Posterior cingulate gyrus (tissue), 11 donors: ENCODE measurements at regions of chrX and their contacts with region 1.

Region 1: GRCh38 chrX:143664302-143664701 is 28.4 kb upstream of the SLITRK4 start:
- DNase-seq: no peak

Region 2: DNA sequence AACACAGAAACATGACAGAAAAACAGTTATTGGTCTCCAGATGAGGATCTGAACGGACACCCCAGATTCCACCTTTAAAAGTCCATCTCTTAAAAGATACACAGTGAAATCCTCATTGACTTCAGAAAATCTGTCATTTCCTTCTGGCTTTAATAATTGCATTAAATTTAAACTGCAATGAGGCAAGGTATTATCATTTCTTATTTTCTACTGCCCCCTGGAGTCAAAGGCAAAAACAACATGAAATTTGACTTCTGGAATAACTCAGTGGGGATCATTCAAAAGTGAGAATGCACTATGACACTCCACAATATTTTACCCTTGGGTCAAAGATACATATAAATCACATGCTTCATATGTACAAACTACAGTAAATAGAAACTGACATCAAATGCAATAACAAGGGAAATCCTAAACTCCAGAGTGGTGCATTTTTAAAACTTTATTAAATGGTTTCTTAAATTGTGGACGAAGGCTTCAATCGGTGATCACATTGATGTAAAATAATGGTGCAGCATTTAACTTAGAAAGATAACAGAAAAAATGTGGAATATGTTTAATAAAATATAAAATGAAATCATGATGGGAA is 1526.6 kb after region 1 on chrX:
- intact Hi-C with region 1: loop called (anchors 10 kb)
- DNase-seq: no peak